Right cardiac atrium (tissue), 5 donors: ENCODE measurements at regions of chr7 and their contacts with region 1.

Region 1: GRCh38 chr7:106056513-106057203 is 55.5 kb downstream of the SYPL1 start:
- DNase-seq: peak; percentile 71 to 82 (median 80)
- ATAC-seq: peak; percentile 90 to 91
- H3K4me3 ChIP-seq: no peak overlapping the region
- H3K27ac ChIP-seq: no peak overlapping the region
- H3K4me1 ChIP-seq: no peaks in the 10 kb centered on the region
- H3K27me3 ChIP-seq: no peaks in the 10 kb centered on the region

Region 2: DNA sequence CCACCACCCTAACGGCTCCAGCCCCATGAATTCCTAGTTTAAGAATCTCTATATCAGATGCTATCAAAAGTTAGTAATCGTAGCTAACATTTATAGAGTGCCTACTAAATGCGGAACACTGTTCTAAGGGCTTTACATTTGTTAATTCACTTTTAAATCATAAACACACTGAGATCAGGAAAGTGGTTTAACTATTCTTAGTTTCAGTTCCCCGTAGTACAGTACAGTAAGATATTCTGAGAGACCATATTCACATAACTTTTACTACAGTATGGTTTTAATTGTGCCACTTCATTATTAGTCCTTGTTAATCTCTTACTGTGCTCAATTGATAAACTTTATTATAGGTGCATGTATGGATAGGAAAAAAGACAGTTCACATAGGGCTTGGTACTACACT is 33.0 kb after region 1 on chr7:
- intact Hi-C with region 1: no loop called
- DNase-seq: no peak
- ATAC-seq: no peak
- H3K4me3 ChIP-seq: no peak overlapping the region
- H3K27ac ChIP-seq: no peak overlapping the region
- H3K4me1 ChIP-seq: no peaks in the 10 kb centered on the region
- H3K27me3 ChIP-seq: no peaks in the 10 kb centered on the region

Region 3: DNA sequence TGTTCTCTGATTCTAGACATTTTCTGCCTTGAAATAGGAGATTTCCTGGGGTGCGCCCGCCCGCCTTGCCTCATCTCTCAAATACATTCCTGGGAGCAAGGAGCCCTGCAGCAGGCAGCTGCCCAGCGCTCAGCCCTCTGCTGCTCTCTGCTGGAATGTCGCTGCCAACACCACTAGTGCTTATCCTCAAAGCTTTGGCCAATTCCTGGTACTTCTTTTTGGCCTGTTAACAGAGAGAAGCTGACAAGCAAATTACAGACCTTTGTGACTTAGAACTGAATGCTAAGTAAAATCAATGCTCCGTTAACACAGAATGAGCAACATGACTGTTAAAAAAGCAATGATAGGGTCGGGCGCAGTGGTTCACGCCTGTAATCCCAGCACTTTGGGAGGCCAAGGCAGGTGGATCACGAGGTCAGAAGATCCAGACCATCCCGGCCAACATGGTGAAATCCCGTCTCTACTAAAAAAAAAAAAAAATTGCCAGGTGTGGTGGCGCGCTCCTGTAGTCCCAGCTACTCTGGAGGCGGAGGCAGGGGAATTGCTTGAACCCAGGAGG is 97.3 kb after region 1 on chr7:
- intact Hi-C with region 1: loop called (anchors 1 to 5 kb)
- DNase-seq: peak; percentile 84 to 93 (median 91)
- ATAC-seq: peak; percentile 96
- H3K4me3 ChIP-seq: no peak overlapping the region
- H3K27ac ChIP-seq: no peak overlapping the region
- H3K4me1 ChIP-seq: no peaks in the 10 kb centered on the region
- H3K27me3 ChIP-seq: no peaks in the 10 kb centered on the region